ENCODE measurements at regions of chr1 and their contacts with region 1.

Region 1: GRCh38 chr1:200802865-200803512 is 64.3 kb downstream of the CAMSAP2 start:
- DNase-seq: peak; percentile 61 to 95 (median 85)

Region 2: GRCh38 chr1:200620273-200621131 is 182.5 kb before region 1 on chr1 and contains the start of gene KIF14:
- intact Hi-C with region 1: loop called (anchors 5 kb)
- DNase-seq: peak; percentile 78 to 96 (median 91)

Region 3: DNA sequence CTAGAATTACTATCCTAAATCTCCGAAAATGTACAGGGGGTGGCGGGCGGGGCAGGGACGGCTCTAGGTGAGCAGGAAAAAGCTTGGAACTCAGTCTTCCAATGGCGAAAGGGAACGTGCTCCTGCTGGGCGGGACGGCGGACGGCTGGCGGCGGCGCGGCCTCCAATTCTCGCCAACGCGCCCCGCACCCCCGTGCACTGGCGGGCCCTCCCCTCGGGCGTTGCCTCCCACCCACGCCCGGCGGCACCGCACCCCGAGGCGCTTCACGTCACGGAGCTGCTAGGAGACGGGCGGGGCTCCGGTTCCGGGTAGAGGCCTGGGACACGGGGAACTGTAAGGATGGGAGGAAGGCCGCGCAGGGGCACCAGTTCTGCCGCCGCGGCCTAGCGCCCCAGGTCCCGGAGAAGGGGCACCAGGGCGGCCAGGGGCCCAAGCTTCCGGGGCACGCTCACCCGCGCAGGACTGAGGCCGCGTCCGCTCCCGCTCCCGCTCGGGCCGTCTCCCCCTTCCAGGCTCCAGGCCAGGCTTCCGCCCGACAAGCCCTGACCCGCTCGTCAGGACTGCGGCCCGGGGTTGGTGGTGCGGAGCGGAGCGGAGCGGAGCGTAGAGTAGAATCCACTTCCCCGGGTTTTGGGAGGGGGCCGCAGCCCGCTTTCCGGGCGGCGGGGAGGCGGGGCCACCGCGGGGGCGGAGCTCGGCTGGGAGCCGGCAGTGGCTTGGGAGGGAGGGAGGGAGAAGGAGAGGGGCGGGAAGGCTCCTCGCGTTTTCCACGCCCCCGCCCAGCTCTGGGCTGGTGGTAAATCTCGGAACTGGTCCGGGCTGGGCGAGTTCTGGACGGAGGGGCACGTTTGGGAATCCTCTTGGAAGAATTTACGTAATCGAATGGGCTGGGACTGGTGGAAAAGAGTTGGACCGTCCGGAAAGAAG is 133.4 kb before region 1 on chr1 and contains the start of gene DDX59:
- intact Hi-C with region 1: loop called (anchors 5 kb)
- DNase-seq: peak; percentile 82 to 98 (median 95)

Region 4: GRCh38 chr1:200738740-200739498 is 64.1 kb before region 1 on chr1 and contains the start of gene CAMSAP2:
- intact Hi-C with region 1: loop called (anchors 5 kb)
- DNase-seq: peak; percentile 72 to 95 (median 90)

Measured in head of caudate nucleus (tissue), 42 donors.